Calu3 (cell line): ENCODE measurements at regions of chrX and their contacts with region 1.

Region 1: DNA sequence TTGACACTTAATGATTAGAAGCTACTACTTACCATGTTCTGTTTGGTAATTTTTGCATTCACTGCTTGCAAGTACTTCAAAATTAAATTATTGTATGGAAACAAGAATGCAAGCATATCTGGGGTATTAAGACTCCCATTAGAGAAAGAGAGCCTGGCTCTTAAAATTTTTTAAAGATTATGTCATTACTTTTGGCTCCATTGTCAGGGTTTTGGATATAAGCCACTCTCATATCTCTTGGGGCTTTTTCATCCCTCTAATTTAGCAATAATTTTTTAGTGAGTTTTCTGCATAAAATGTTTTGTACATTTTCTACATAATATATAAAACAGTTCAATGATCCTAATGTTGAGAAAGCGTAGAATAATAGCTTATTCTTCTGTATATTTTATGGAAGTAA is 49.4 kb downstream of the SLC9A6 start:
- DNase-seq: no peak
- H3K4me3 Mint-ChIP-seq: no peak overlapping the region
- H3K27ac Mint-ChIP-seq: no peak overlapping the region
- H3K4me1 Mint-ChIP-seq: no peaks in the 10 kb centered on the region
- H3K27me3 Mint-ChIP-seq: no peaks in the 10 kb centered on the region
- CTCF ChIP-seq: no peak

Region 2: GRCh38 chrX:135625995-135626394 is 408.7 kb before region 1 on chrX:
- CTCF ChIA-PET with region 1: no interaction called
- intact Hi-C with region 1: loop called (anchors 5 kb)
- DNase-seq: peak; percentile 12
- H3K4me3 Mint-ChIP-seq: no peak overlapping the region
- H3K27ac Mint-ChIP-seq: no peak overlapping the region
- H3K4me1 Mint-ChIP-seq: no peaks in the 10 kb centered on the region
- H3K27me3 Mint-ChIP-seq: no peaks in the 10 kb centered on the region
- CTCF ChIP-seq: peak; percentile 21

Region 3: DNA sequence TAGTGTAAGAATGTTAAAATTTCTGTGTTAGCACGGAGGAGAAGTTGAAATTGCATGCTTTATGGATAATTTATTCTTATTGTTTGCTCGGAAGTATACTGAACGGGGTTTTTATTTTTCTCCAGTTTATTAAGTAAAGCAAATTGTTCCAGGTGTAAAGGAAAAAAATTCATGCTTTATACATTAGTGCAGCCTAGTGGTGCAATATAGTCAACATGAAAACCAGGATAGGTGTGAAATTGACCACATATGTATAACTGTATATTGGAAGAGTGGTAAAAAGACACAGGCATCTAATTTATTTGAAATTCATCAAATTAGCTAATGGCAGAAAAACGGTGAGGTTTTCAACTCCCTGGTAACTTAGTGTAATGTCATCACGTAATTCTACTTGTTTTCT is 454.0 kb after region 1 on chrX:
- CTCF ChIA-PET with region 1: no interaction called
- intact Hi-C with region 1: no loop called
- DNase-seq: no peak
- H3K4me3 Mint-ChIP-seq: no peak overlapping the region
- H3K27ac Mint-ChIP-seq: no peak overlapping the region
- H3K4me1 Mint-ChIP-seq: no peaks in the 10 kb centered on the region
- H3K27me3 Mint-ChIP-seq: peaks cover 73% of the 10 kb centered on the region
- CTCF ChIP-seq: no peak